GM12878 (cell line): ENCODE measurements at regions of chr13 and their contacts with region 1.

Region 1: DNA sequence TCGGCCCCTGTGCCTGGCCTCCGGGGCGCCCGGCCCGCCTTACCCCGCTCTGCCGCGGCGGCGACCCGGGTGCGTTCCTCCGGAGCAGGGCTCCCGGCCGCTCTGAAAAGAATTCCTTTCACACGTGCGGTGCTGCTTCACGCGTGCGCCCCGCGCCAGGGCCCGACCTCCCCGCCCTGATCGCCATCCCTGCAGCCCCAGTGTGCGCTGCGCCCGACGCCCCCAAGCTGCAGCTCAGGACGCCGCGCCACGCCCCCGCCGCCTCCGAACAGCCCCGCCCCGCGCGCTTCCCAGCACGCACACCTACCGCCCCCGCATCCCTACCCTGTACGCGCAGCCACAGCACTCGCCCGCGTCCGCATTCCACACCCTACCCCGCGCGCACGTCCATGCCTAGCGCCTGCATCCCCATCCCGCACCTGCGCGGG is at the start of gene GJA3:
- DNase-seq: no peak
- ATAC-seq: peak; percentile 68
- H3K4me3 ChIP-seq: peak within 1 kb of the TSS; percentile 71
- H3K27ac ChIP-seq: no peak within 1 kb of the TSS
- H3K4me1 ChIP-seq: no peaks in the 10 kb centered on the region; the same call in 1 of the 2 replicates
- H3K27me3 ChIP-seq: peaks cover 3 to 5% of the 10 kb centered on the region in 2 experiments
- CTCF ChIP-seq: no peak
- EP300 ChIP-seq: no peak
- POLR2A ChIP-seq: no peak
- RAD21 ChIP-seq: no peak
- polyA plus RNA-seq, gene GJA3: not detected

Region 2: DNA sequence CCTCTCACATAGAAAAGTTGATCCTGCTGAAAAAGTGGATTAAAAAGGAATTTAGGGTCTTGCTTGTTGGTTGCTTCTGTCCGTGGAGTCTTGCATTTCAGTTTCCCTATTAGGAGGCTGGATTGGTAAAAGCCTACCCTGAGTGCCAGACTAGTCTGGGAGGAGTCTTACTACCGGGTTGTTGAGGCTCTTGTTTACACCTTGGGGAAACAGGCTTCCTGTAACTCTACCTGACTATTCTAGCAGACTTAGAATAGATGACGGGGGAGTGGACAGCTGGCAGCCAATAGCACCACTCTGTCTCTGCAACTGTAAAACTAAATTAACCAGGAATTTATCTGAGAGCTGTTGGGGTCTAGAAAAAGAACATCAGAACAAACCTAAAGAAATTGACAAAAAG is 538.7 kb before region 1 on chr13:
- CTCF ChIA-PET with region 1: no interaction called
- POLR2A ChIA-PET with region 1: no interaction called
- RAD21 ChIA-PET with region 1: no interaction called
- SMC1A ChIA-PET with region 1: no interaction called
- in situ Hi-C with region 1: no loop called
- intact Hi-C with region 1: no loop called
- DNase-seq: no peak
- ATAC-seq: no peak
- H3K4me3 ChIP-seq: no peak overlapping the region
- H3K27ac ChIP-seq: no peak overlapping the region
- H3K4me1 ChIP-seq: no peaks in the 10 kb centered on the region
- H3K27me3 ChIP-seq: no peaks in the 10 kb centered on the region
- CTCF ChIP-seq: no peak
- EP300 ChIP-seq: no peak
- POLR2A ChIP-seq: no peak
- RAD21 ChIP-seq: no peak

Region 3: GRCh38 chr13:19927117-19927748 is 233.6 kb before region 1 on chr13:
- CTCF ChIA-PET with region 1: interaction called, 7 read pairs
- POLR2A ChIA-PET with region 1: no interaction called
- RAD21 ChIA-PET with region 1: interaction called, 4 read pairs
- SMC1A ChIA-PET with region 1: no interaction called
- in situ Hi-C with region 1: no loop called
- intact Hi-C with region 1: loop called (anchors 2 kb)
- DNase-seq: no peak
- ATAC-seq: peak; percentile 76
- H3K4me3 ChIP-seq: no peak overlapping the region
- H3K27ac ChIP-seq: no peak overlapping the region
- H3K4me1 ChIP-seq: no peaks in the 10 kb centered on the region
- H3K27me3 ChIP-seq: no peaks in the 10 kb centered on the region
- CTCF ChIP-seq: peak; percentile 38 to 60 (median 55); a peak in 5 of 6 replicates
- EP300 ChIP-seq: no peak
- POLR2A ChIP-seq: no peak
- RAD21 ChIP-seq: peak; percentile 46

Region 4: DNA sequence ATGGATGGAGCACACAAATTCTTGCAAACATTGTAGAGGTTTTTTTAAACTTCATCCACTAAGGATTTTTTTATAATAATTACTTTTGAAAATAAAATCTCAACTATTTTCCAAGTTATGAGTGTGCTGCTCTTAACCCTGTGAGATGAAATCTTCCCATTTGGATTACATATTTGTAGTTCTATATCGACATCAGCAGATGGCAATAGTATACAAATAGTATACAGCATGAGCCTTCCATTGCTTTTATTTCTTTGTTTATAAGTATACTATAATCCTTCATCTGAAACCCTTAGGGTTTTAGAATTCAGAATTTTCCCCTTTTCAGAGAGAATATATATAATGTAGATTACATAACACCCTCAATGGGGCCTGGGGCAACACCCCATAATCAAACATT is 70.5 kb before region 1 on chr13:
- CTCF ChIA-PET with region 1: interaction called, 3 read pairs
- POLR2A ChIA-PET with region 1: no interaction called
- RAD21 ChIA-PET with region 1: no interaction called
- SMC1A ChIA-PET with region 1: no interaction called
- in situ Hi-C with region 1: no loop called
- intact Hi-C with region 1: loop called (anchors 5 kb)
- DNase-seq: no peak
- ATAC-seq: no peak
- H3K4me3 ChIP-seq: no peak overlapping the region
- H3K27ac ChIP-seq: no peak overlapping the region
- H3K4me1 ChIP-seq: no peaks in the 10 kb centered on the region
- H3K27me3 ChIP-seq: no peaks in the 10 kb centered on the region
- CTCF ChIP-seq: no peak; a peak in 1 of 6 replicates
- EP300 ChIP-seq: no peak
- POLR2A ChIP-seq: no peak
- RAD21 ChIP-seq: no peak

Region 5: GRCh38 chr13:20127577-20128466 is 33.0 kb before region 1 on chr13:
- CTCF ChIA-PET with region 1: no interaction called
- POLR2A ChIA-PET with region 1: interaction called, 3 read pairs
- RAD21 ChIA-PET with region 1: interaction called, 3 read pairs
- SMC1A ChIA-PET with region 1: no interaction called
- in situ Hi-C with region 1: no loop called
- intact Hi-C with region 1: loop called (anchors 5 kb)
- DNase-seq: no peak
- ATAC-seq: peak; percentile 89
- H3K4me3 ChIP-seq: peak overlapping the region; percentile 69
- H3K27ac ChIP-seq: no peak overlapping the region
- H3K4me1 ChIP-seq: no peaks in the 10 kb centered on the region
- H3K27me3 ChIP-seq: peaks cover 2 to 5% of the 10 kb centered on the region in 2 experiments; a peak in 2 of 4 replicates
- CTCF ChIP-seq: peak; percentile 25 to 48 (median 42); a peak in 4 of 6 replicates
- EP300 ChIP-seq: no peak
- POLR2A ChIP-seq: peak; percentile 62; the same call in 1 of the 2 replicates
- RAD21 ChIP-seq: 0 out of 2 replicates have a peak, but pooled peaks have one; percentile 13